ENCODE measurements at regions of chr18 and their contacts with region 1.

Region 1: DNA sequence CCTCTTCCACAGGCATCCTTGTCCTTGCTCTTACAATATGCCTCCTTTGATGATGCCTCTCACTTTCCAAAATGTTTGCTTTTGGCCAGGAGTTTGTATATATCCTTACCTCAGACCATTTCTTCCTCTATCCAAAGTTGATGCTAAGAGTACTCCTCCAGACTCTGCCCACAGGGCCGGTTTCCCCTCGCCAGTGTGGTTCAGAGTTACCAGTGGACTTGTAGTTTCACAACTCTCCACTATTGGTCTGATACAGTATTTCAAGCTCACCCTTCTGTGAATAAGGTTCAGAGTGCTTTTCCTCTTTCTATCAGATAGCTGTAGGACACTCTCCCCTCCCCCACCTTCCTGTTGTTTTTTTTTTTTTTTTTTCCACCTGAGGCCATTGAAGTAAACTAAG is 42.2 kb upstream of the LINC00305 start:
- DNase-seq: no peak
- H3K4me3 ChIP-seq: no peak overlapping the region
- H3K27ac ChIP-seq: no peak overlapping the region
- H3K4me1 ChIP-seq: no peaks in the 10 kb centered on the region
- H3K27me3 ChIP-seq: no peaks in the 10 kb centered on the region
- CTCF ChIP-seq: no peak

Region 2: GRCh38 chr18:62784966-62785413 is 1406.1 kb before region 1 on chr18:
- intact Hi-C with region 1: no loop called
- DNase-seq: peak in 1 of 2 donors; percentile 45
- H3K4me3 ChIP-seq: no peak overlapping the region
- H3K27ac ChIP-seq: no peak overlapping the region
- H3K4me1 ChIP-seq: peaks cover 0 to 21% (median 8%) of the 10 kb centered on the region in 4 donors
- H3K27me3 ChIP-seq: no peaks in the 10 kb centered on the region
- CTCF ChIP-seq: no peak

Region 3: DNA sequence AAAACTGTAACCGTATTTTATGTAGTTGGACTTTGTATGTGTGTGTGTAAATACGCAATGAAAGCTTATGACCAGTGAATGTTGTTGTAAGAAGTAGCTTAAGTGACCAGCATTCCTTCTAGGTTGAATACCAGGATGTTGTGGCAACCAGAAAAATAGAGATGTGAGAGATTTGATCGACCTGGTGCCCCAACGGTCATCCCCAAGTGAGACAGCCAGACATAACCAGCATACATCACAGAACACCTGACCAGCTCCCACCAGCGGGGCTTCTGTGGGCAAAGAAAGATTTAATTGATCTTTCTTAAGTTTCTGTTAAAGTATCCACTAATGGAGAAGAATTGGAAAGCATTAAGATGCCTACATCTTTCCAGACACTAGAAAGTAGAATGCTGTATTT is 44.7 kb before region 1 on chr18:
- intact Hi-C with region 1: no loop called
- DNase-seq: no peak
- H3K4me3 ChIP-seq: no peak overlapping the region
- H3K27ac ChIP-seq: no peak overlapping the region
- H3K4me1 ChIP-seq: no peaks in the 10 kb centered on the region
- H3K27me3 ChIP-seq: no peaks in the 10 kb centered on the region
- CTCF ChIP-seq: no peak

Region 4: GRCh38 chr18:64238076-64238475 is 47.0 kb after region 1 on chr18:
- intact Hi-C with region 1: loop called (anchors 2 kb)
- DNase-seq: no peak
- H3K4me3 ChIP-seq: no peak overlapping the region
- H3K27ac ChIP-seq: no peak overlapping the region
- H3K4me1 ChIP-seq: no peaks in the 10 kb centered on the region
- H3K27me3 ChIP-seq: no peaks in the 10 kb centered on the region
- CTCF ChIP-seq: no peak

Region 5: DNA sequence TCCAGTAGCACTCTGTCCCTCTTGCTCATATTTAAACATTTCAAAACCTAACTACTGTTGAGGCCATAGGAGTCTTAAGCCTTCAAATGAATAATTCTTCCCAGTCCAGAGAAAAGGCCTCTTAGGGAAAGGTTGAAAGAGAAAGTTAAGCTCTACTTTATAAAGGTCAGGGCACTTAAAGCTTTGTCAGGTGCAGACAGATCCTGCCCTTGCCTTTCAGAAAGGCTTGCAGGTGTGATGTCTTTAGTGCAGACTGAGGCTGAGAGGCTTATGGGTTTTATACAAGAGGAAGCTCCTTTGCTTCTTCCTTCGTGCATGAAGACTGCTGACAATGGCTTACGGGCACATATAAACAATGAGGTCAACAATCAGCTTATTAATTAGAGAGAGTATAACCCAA is 62.8 kb after region 1 on chr18:
- intact Hi-C with region 1: no loop called
- DNase-seq: no peak
- H3K4me3 ChIP-seq: no peak overlapping the region
- H3K27ac ChIP-seq: no peak overlapping the region
- H3K4me1 ChIP-seq: no peaks in the 10 kb centered on the region
- H3K27me3 ChIP-seq: no peaks in the 10 kb centered on the region
- CTCF ChIP-seq: no peak

Region 6: DNA sequence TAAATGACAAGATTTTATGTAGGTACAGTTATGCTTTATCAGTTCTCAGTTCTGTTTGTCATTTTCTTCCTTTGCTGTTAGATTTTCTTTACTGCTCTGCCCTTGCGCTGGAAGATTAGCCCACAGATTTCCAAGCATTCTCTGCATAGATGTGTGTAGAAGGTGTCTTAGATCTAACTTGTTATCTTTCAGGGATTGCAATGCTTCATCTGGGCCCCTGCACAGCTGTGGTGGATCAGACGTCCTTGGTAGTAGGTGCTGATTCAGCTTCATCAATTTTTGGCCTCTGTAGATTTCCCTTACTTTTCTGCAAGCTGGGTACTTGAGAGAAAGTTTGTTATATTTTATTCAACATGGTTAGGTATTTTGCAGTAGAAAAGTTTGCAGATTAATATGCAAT is 73.1 kb after region 1 on chr18:
- intact Hi-C with region 1: no loop called
- DNase-seq: no peak
- H3K4me3 ChIP-seq: no peak overlapping the region
- H3K27ac ChIP-seq: no peak overlapping the region
- H3K4me1 ChIP-seq: no peaks in the 10 kb centered on the region
- H3K27me3 ChIP-seq: no peaks in the 10 kb centered on the region
- CTCF ChIP-seq: no peak

Measured in tibial artery (tissue), 4 donors.